Right ventricle myocardium superior (tissue), 1 donor: ENCODE measurements at regions of chr2 and their contacts with region 1.

Region 1: DNA sequence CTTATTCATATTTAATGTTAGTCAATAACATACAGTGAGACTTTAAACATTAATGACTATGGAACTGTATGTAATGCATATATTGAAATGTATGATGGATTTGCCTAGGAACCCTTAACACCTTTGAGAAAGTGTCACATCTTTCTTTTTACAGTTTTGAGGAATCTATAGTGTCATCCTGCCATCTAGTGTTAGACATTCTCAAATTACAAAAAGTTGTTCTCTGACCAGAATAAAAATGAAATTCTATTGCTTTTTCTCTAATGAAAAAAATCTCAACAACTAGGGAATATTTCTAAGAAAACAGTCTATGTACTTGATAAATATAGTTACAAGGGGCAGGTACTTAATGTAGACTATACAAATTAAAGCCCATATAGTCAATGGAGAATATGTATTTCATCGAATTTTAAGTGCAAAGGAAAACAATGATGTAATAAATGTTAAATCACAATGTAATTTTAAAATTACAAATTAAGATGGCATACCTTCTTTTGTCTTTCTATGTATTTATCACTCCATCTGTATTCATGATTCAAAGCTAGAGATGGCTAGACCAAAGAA is 5.1 kb upstream of the CALCRL start:
- DNase-seq: no peak
- ATAC-seq: no peak

Region 2: DNA sequence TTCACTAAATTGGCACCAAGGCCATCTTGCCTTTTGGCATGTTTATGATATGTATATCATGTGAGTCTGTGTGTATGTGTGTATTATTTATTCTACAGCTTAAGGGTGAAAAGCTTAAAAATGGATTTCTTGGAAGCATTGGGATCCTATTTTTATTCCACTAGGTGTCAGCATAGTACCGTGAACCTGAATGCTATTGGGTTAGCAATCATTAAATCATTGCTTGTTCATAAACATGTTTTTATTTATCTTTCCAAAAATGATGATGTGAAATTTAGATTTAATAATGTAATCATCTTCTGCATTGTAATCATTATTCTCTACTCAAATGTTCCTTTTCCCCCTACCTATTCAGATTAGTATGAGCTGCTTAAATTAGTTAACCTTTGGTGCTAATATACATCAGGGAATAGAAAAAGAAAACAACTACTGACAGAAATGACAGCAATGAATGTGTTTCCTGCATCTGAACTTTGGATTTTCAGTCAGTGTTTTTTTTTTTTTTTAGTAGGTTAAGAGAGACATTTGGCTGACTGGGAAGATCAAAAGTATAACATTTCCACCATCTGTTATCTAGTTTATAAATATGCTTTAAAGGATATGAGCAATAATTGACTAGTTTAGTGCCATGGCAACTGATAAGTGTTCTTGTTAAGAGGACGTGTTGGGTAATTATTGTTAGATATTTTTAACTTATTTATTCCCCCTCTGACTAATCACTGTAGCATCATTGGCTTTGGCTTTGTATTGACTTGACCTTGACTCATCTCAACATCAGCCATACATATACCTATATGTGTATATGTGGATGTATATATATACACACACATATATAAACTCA is 590.1 kb before region 1 on chr2:
- intact Hi-C with region 1: loop called (anchors 5 kb)
- DNase-seq: no peak
- ATAC-seq: peak; percentile 71

Region 3: GRCh38 chr2:187138265-187138664 is 314.9 kb before region 1 on chr2:
- intact Hi-C with region 1: loop called (anchors 10 kb)
- DNase-seq: peak; percentile 68
- ATAC-seq: peak; percentile 85

Region 4: DNA sequence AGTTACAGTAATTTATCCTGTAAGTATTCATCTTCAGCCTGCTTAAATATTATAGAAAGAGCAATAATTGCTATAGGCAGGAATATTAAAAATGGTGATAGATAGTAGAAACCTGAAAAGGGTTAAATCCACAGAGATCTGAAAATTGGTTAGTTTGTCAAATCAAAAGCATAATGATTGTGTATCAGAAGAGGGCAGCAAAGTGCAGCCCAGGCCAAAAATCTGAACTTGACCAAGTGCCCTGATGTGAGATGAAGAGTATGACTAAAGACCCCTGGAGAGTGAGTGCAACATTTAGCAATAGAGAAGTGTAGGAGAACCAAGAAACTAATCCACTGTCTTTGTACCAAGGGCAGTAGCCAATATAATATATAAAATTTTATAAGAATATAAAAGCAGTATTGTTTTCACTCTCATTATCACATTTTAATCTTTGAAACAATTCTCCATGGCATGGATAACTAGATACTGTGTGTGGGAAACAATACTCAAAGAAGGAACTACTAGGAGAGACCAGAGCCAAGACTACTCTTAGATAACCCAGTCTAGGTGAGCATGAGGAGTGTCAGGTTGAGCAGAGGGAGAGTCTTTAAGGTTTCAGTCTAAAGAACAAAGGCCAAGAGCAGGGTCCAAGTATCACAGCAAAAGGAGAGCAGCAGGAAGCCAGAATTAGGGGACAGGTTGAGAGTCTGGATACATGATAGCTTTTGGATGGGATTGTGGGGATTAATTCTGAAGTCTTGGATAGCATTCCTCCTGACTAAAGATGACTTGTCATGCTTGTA is 153.8 kb before region 1 on chr2:
- intact Hi-C with region 1: loop called (anchors 5 kb)
- DNase-seq: no peak
- ATAC-seq: peak; percentile 36

Region 5: DNA sequence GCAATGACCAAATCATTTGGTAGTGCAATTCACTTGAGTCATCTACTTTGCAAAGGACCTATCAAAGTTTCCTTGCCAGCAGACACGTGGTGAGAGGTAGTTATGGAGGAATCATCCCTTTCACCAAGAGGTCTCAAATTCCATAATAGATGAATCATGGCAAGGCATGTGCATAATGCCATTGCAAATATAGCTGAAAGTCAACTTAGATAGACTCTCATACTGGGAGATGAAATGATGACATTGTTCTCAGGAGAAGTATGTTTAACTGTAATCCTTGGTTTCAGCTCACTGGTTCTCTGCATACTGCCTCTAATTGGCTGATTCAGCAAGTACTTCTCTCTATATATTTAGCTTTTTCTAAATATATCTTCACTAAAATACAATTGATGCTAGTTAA is 62.3 kb before region 1 on chr2:
- intact Hi-C with region 1: no loop called
- DNase-seq: no peak
- ATAC-seq: no peak